Left ventricle myocardium inferior (tissue), 1 donor: ENCODE measurements at regions of chr1 and their contacts with region 1.

Region 1: DNA sequence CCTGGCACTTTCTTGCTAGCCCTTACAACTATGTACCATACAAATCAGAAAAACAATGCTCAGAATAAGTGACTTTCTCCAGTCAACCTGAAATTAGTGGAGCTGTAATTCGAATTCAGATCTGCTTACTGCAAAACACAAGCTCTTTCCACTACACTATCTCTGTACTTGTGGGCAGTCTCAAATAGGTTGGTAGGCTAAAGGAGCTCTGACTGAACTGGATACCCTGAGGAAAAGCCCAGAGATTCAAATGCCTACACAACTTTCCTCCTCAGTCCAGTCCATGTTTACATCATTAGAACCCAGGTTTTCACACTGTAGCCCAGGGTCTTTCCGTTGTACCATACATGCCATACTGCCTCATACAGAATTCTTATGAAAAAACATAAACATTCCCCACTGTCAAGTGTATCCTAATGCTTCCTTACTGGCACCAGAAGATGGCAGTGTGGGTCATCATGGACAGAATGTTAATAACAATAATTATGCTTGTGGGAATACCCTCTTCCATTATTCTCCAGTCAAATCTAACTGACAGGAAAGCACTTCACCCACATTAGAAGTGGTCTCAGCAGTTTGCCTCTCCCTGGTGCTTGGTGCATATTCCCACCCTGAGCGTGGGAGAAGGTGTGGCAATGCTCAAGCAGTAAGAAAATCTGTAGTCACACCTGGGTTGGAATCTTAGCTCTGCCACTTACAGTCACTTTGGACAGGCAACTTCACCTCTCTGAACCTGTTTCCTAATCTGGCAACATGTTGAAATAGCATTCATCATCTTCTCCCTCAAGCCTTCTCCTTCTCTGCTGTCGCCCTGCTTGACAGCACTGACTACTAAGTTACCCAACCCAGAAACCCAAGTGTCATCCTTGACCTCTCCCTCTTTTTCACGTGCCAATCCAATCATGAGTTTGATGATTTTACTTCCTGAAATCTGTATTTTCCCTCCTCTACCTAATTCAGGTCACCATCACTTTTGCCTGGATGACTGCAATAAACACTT is 14.4 kb upstream of the ZFYVE9 start:
- DNase-seq: no peak
- H3K4me3 ChIP-seq: no peak overlapping the region
- H3K27ac ChIP-seq: no peak overlapping the region
- H3K4me1 ChIP-seq: no peaks in the 10 kb centered on the region
- H3K27me3 ChIP-seq: peaks cover 31% of the 10 kb centered on the region
- CTCF ChIP-seq: peak; percentile 77

Region 2: GRCh38 chr1:52080014-52080415 is 47.5 kb before region 1 on chr1:
- intact Hi-C with region 1: no loop called
- DNase-seq: no peak
- H3K4me3 ChIP-seq: no peak overlapping the region
- H3K27ac ChIP-seq: no peak overlapping the region
- H3K4me1 ChIP-seq: no peaks in the 10 kb centered on the region
- H3K27me3 ChIP-seq: no peaks in the 10 kb centered on the region
- CTCF ChIP-seq: no peak

Region 3: GRCh38 chr1:52296345-52296744 is 168.9 kb after region 1 on chr1:
- intact Hi-C with region 1: loop called (anchors 5 kb)
- DNase-seq: no peak
- H3K4me3 ChIP-seq: no peak overlapping the region
- H3K27ac ChIP-seq: no peak overlapping the region
- H3K4me1 ChIP-seq: no peaks in the 10 kb centered on the region
- H3K27me3 ChIP-seq: no peaks in the 10 kb centered on the region
- CTCF ChIP-seq: peak; percentile 73

Region 4: GRCh38 chr1:52683367-52683940 is 556.0 kb after region 1 on chr1:
- intact Hi-C with region 1: loop called (anchors 10 kb)
- DNase-seq: no peak
- H3K4me3 ChIP-seq: no peak overlapping the region
- H3K27ac ChIP-seq: no peak overlapping the region
- H3K4me1 ChIP-seq: peaks cover 11% of the 10 kb centered on the region
- H3K27me3 ChIP-seq: no peaks in the 10 kb centered on the region
- CTCF ChIP-seq: no peak